AG04450 (cell line): ENCODE measurements at regions of chr14 and their contacts with region 1.

Region 1: DNA sequence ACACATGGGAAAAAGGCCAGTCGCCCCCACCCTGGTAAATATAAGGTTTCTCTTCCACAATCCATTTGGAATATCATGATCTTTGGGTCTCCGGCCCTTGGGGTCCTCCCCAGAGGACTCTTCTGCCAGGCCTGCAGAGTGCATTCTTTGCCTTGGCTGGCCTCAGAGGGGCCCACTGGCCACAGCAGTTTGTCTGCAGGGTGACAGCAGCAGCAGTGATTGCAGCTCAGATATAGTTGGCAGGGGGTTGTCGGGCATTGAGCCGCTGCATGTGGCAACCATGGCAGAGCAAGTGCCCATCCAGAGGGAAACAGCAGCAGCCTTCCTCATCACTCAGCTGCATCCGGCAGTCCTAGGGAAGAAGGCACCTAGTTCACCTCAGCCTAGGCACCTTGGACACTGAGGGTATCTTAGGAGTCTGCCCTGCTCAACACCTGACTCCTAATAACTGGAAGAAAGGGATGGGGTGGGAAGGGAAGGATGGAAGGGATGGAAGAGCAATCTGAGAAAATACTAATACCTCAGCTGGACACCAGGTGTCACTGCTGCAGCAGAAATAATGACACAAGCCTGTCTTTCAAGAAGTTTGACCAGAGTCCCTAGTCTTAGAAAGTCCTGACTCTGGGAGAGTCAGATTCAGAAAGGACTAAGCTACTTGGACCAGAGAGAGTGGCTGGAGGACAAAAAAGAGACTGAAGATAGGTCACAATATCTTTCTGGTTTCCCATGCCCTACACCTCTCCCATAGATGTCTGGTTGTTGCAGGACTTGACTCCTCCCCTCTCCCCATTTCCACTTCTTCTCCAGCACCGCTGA is 8.9 kb downstream of the AJUBA start:
- DNase-seq: no peak
- H3K4me3 ChIP-seq: no peak overlapping the region
- H3K27ac ChIP-seq: no peak overlapping the region
- H3K27me3 ChIP-seq: no peaks in the 10 kb centered on the region
- CTCF ChIP-seq: peak; percentile 68

Region 2: DNA sequence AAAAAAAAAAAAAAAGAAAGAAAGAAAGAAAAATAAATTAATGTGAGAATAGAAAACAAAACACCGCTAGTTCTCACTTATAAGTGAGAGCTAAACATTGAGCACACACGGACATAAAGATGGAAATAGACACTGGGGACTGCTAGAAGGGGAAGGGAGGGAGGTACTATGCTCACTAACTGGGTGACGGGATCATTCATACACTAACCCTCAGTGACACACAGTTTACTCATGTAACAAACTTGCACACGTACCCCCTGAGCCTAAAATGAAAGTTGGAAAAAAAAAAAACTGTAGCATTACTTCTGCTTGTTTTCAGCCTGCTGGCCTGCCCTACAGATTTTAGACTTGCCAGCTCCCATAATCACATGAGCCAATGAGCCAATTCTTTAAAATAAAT is 33.7 kb before region 1 on chr14:
- CTCF ChIA-PET with region 1: interaction called, 4 read pairs
- POLR2A ChIA-PET with region 1: interaction called, 11 read pairs
- DNase-seq: peak; percentile 30
- H3K4me3 ChIP-seq: no peak overlapping the region
- H3K27ac ChIP-seq: peak overlapping the region; percentile 31
- H3K27me3 ChIP-seq: no peaks in the 10 kb centered on the region
- CTCF ChIP-seq: no peak

Region 3: DNA sequence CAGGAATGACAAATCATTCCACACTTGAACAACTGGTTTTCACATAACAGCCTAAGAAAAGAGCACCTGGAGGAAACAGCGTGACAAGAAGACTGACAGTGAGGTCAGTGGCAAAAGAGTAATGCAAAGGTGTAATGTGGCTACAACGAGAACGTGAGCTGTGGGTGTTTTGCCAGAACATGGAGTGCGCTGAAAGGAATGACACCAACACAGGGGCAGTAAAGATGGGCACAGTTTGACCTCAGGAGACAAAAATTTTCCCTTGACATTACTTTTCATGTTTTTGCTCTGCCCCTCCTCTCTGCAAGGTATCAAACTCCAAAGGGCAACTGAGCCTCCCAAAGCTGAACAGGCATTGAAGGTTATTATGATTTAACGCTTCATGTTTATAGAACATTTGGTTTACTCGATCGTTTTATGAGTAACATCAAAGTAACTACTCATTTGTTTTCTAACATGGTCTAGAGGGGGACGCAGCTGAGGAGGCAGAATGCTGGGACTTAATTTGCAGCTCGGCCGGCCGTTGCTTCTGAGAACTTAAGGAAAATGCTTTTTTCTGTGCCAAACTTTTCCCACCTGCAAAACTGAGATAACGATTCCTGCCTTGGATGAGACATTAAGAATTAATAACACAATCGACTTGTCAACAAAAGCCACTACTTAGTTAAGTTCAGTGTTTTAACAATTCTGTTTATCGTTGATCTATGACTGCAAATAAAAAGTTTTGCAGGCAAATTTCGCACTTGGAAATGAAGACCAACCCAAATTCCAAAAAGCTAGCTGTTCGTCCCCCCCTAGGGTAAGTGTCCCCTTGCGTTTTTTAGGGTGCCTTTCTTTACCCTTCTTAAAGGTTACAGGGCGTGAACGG is 17.5 kb before region 1 on chr14:
- CTCF ChIA-PET with region 1: interaction called, 25 read pairs
- POLR2A ChIA-PET with region 1: interaction called, 11 read pairs
- DNase-seq: no peak
- H3K4me3 ChIP-seq: peak overlapping the region; percentile 66
- H3K27ac ChIP-seq: peak overlapping the region; percentile 68
- H3K27me3 ChIP-seq: no peaks in the 10 kb centered on the region
- CTCF ChIP-seq: no peak

Region 4: DNA sequence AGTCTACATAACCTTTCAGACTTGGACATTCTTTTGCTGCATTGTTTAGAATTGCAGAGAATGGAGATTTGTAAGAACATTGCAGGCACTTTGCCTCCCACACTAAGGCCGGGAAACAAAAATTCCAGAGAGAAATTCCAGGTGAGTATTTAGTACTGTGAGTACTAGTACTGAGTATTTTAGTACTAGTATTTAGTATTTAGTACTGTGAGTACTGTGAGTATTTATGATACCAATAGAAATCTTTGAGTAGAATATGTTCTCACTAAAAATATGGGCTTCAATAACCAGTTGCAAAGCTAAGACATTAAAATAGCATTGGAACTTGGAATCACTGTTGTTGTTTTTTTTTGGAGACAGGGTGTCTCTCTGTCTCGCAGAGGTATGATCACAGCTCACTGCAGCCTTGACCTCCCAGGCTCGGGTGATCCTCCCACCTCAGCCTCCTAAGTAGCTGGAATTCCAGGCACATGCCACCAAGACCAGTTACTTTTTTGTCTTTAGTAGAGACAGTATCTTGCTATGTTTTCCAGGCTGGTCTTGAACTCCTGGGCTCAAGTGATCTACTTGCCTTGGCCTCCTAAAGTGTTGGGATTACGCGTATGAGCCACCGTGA is 11.3 kb before region 1 on chr14:
- CTCF ChIA-PET with region 1: interaction called, 25 read pairs
- POLR2A ChIA-PET with region 1: interaction called, 11 read pairs
- DNase-seq: no peak
- H3K4me3 ChIP-seq: no peak overlapping the region
- H3K27ac ChIP-seq: no peak overlapping the region
- H3K27me3 ChIP-seq: no peaks in the 10 kb centered on the region
- CTCF ChIP-seq: no peak

Region 5: DNA sequence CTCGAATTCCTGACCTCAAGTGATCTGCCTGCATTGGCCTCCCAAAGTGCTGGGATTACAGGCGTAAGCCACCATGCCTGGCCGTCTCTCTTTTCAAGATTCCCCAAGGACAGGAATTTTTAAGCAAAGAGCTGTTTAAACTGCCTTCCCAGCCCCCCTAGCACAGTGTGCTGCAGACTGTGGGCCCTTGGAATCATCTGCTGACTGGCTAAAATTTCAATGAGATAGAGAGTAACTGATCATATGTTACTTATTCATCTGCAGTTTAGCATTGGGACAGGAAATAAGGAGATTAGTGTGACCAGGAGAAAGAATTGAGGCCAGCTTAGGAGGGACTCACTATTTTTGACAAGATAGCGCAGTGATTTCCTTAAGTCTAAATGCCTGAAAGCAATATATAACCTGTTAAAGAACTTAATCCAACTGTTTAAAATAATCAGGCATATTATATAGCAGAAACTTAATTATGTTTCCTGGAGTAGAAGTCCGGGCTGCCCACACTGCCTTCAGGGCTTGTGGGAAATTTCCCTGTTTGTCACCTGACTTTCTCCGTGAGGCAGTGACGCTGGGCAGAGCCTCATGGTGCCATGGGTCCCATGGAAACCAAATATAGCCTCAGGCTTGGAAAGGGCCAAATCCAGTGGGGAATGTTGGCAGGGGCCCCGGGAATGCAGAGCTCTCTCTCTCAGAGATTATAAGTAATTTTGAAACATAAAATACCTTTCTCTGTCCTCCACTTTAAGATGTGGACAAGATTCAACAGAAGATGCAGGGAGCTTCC is 168.4 kb after region 1 on chr14:
- CTCF ChIA-PET with region 1: no interaction called
- POLR2A ChIA-PET with region 1: no interaction called
- DNase-seq: no peak
- H3K4me3 ChIP-seq: no peak overlapping the region
- H3K27ac ChIP-seq: no peak overlapping the region
- H3K27me3 ChIP-seq: peaks cover 25% of the 10 kb centered on the region
- CTCF ChIP-seq: no peak